B cell (primary cell): ENCODE measurements at regions of chr7 and their contacts with region 1.

Region 1: GRCh38 chr7:106731187-106731586 is 70.2 kb upstream of the CCDC71L start:
- DNase-seq: peak; percentile 76
- ATAC-seq: peak; percentile 83
- H3K4me3 ChIP-seq: peak overlapping the region in 1 of 5 experiments; percentile 26
- H3K4me3 Mint-ChIP-seq: peak overlapping the region; percentile 64
- H3K27ac ChIP-seq: peak overlapping the region; percentile 8 to 10
- H3K27ac Mint-ChIP-seq: peak overlapping the region; percentile 64
- H3K4me1 ChIP-seq: peaks cover 26 to 28% of the 10 kb centered on the region in 2 donors
- H3K4me1 Mint-ChIP-seq: peaks cover 28% of the 10 kb centered on the region
- H3K27me3 ChIP-seq: no peaks in the 10 kb centered on the region
- H3K27me3 Mint-ChIP-seq: no peaks in the 10 kb centered on the region
- CTCF ChIP-seq: no peak

Region 2: DNA sequence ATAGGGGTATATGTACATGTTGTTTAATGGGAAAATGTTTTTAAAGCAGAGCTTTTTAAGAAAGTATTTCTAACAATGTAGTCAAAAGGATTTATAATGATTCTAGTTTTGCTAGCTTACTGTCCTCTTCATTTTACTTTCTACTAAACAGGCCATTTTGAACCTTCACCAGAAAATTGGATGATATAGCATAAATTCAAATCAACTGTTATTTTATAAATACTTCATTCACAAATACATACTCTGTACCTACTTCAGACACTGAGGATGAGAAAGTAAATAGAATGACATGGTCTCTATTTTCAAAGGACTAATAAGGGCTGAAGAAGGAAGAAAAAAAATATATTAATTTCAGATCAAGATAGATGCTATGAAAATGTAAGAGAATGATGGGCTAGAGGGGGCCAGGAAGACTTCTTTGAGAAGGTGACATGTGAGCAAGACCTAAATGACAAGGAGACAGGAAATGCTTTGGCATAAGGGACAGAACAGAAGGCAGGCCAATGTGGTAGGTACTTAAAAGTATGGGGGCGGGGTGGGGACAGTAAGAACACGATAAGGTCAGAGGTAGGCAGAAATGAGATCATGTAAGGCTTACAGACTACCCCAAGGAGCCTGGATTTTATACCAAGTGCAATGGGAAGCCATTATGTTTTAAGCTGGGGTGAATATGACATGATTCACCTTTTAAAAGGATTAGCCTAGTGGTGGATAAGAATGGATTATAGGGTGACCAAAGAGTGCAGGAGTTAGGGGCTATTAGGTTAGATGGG is 451.6 kb before region 1 on chr7:
- CTCF ChIA-PET with region 1: no interaction called
- POLR2A ChIA-PET with region 1: no interaction called
- intact Hi-C with region 1: no loop called
- DNase-seq: no peak
- ATAC-seq: no peak
- H3K4me3 ChIP-seq: peak overlapping the region in 1 of 5 experiments; percentile 63
- H3K4me3 Mint-ChIP-seq: no peak overlapping the region
- H3K27ac ChIP-seq: no peak overlapping the region
- H3K27ac Mint-ChIP-seq: no peak overlapping the region
- H3K4me1 ChIP-seq: peaks cover 0 to 14% of the 10 kb centered on the region in 2 donors
- H3K4me1 Mint-ChIP-seq: peaks cover 36% of the 10 kb centered on the region
- H3K27me3 ChIP-seq: no peaks in the 10 kb centered on the region
- H3K27me3 Mint-ChIP-seq: no peaks in the 10 kb centered on the region
- CTCF ChIP-seq: no peak

Region 3: GRCh38 chr7:106514881-106515280 is 216.3 kb before region 1 on chr7:
- CTCF ChIA-PET with region 1: no interaction called
- POLR2A ChIA-PET with region 1: no interaction called
- intact Hi-C with region 1: no loop called
- DNase-seq: no peak
- ATAC-seq: no peak
- H3K4me3 ChIP-seq: no peak overlapping the region
- H3K4me3 Mint-ChIP-seq: no peak overlapping the region
- H3K27ac ChIP-seq: no peak overlapping the region
- H3K27ac Mint-ChIP-seq: no peak overlapping the region
- H3K4me1 ChIP-seq: no peaks in the 10 kb centered on the region
- H3K4me1 Mint-ChIP-seq: no peaks in the 10 kb centered on the region
- H3K27me3 ChIP-seq: peaks cover 0 to 17% (median 8%) of the 10 kb centered on the region in 4 experiments
- H3K27me3 Mint-ChIP-seq: peaks cover 35% of the 10 kb centered on the region
- CTCF ChIP-seq: no peak

Region 4: GRCh38 chr7:106717955-106718871 is 13.0 kb before region 1 on chr7:
- CTCF ChIA-PET with region 1: interaction called, 66 read pairs
- POLR2A ChIA-PET with region 1: interaction called, 7 read pairs
- intact Hi-C with region 1: loop called (anchors 1 kb)
- DNase-seq: peak; percentile 73
- ATAC-seq: peak; percentile 91
- H3K4me3 ChIP-seq: peak overlapping the region in 1 of 5 experiments; percentile 37
- H3K4me3 Mint-ChIP-seq: no peak overlapping the region
- H3K27ac ChIP-seq: peak overlapping the region; percentile 20 to 43
- H3K27ac Mint-ChIP-seq: no peak overlapping the region
- H3K4me1 ChIP-seq: peaks cover 65 to 76% of the 10 kb centered on the region in 2 donors
- H3K4me1 Mint-ChIP-seq: peaks cover 47% of the 10 kb centered on the region
- H3K27me3 ChIP-seq: no peaks in the 10 kb centered on the region
- H3K27me3 Mint-ChIP-seq: no peaks in the 10 kb centered on the region
- CTCF ChIP-seq: no peak

Region 5: GRCh38 chr7:106824458-106824857 is 93.3 kb after region 1 on chr7:
- CTCF ChIA-PET with region 1: no interaction called
- POLR2A ChIA-PET with region 1: no interaction called
- intact Hi-C with region 1: no loop called
- DNase-seq: no peak
- ATAC-seq: no peak
- H3K4me3 ChIP-seq: no peak overlapping the region
- H3K4me3 Mint-ChIP-seq: no peak overlapping the region
- H3K27ac ChIP-seq: no peak overlapping the region
- H3K27ac Mint-ChIP-seq: no peak overlapping the region
- H3K4me1 ChIP-seq: no peaks in the 10 kb centered on the region
- H3K4me1 Mint-ChIP-seq: peaks cover 3% of the 10 kb centered on the region
- H3K27me3 ChIP-seq: no peaks in the 10 kb centered on the region
- H3K27me3 Mint-ChIP-seq: no peaks in the 10 kb centered on the region
- CTCF ChIP-seq: no peak

Region 6: DNA sequence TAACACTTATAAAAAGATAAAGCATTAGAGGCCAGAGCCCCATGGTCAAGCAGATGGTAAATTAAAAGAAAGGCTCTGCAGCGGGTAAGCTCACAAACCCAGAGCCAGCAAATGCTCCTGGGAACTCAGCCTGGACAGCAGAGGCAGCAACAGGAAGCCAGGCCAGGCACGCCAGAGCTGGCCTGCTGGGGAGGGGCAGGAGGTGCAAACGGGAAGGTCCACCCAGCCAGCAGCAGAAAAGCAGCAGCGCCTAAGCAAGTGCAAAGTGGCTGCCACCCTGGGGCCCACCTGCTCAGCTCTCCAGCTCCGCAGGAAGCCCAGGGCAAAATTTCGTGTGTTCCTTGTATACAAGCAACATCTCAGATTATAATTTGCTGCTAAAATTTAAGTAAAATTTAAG is 655.9 kb after region 1 on chr7:
- CTCF ChIA-PET with region 1: no interaction called
- POLR2A ChIA-PET with region 1: no interaction called
- intact Hi-C with region 1: no loop called
- DNase-seq: no peak
- ATAC-seq: no peak
- H3K4me3 ChIP-seq: no peak overlapping the region
- H3K4me3 Mint-ChIP-seq: no peak overlapping the region
- H3K27ac ChIP-seq: no peak overlapping the region
- H3K27ac Mint-ChIP-seq: no peak overlapping the region
- H3K4me1 ChIP-seq: peaks cover 0 to 7% of the 10 kb centered on the region in 2 donors
- H3K4me1 Mint-ChIP-seq: peaks cover 12% of the 10 kb centered on the region
- H3K27me3 ChIP-seq: no peaks in the 10 kb centered on the region
- H3K27me3 Mint-ChIP-seq: no peaks in the 10 kb centered on the region
- CTCF ChIP-seq: no peak